ENCODE measurements at regions of chr14 and their contacts with region 1.

Region 1: DNA sequence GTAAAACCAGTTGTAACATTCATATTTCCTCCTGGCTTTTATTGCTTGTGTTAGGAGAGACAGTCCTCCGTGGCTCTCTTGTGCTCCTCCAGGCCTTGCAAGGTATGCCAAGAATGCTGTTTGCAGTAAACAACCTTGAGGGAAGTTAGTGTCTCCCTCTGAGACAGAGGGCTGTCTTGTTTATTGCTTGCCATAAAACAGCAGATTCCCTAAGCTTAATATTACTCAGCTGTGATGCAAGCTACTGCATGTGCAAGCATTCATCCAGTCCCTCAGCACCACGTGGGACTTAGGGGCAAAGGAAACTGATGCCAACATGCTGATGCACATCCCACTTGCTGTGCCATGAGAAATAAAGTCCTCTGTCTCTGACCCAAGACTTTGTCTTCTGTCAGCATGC is 6.6 kb downstream of the POMT2 start:
- DNase-seq: peak in 1 of 2 experiments; percentile 83
- H3K4me3 ChIP-seq: no peak overlapping the region
- H3K27ac ChIP-seq: no peak overlapping the region
- H3K4me1 ChIP-seq: peaks cover 1% of the 10 kb centered on the region; the same call in 1 of the 2 replicates
- H3K27me3 ChIP-seq: no peaks in the 10 kb centered on the region
- CTCF ChIP-seq: 0 out of 2 replicates have a peak, but pooled peaks have one; percentile 9

Region 2: DNA sequence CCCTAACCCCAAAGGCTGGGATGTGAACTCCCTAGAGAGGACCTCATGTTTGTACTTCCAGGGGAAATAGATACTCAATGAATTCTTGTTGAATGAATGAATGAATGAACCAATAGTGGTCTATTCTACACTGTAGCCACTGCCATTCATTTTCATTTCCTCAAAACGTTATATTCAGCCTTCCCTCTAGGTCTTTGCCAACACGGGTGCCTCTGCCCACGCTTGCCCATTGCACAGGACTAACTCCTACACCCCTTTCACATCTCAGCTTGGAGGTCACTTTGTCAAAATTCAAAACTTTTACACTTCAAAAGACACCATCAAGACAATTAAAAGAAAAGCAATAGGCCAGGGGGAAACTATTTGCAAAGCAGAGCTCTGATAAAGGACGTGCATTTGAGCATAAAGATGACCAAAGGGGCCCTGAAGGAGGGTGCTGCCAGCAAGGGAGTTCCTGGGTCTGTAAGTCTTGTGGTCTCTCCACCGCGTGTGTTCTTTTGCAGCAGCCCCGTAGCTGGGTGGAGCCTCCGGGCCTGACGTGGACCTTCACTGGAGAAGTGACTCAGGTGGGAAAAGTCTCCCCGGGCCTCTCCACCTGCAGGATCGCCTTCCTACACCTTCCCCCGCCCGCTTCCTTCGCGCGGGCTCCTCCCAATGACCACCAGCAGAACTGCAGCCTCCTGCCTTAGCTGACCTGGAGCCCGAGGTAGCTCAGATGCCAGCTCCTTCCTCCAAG is 100.9 kb before region 1 on chr14:
- CTCF ChIA-PET with region 1: interaction called, 10 read pairs
- POLR2A ChIA-PET with region 1: no interaction called
- intact Hi-C with region 1: no loop called
- DNase-seq: peak; percentile 55 to 82
- H3K4me3 ChIP-seq: no peak overlapping the region
- H3K27ac ChIP-seq: no peak overlapping the region
- H3K4me1 ChIP-seq: no peaks in the 10 kb centered on the region
- H3K27me3 ChIP-seq: peaks cover 71% of the 10 kb centered on the region
- CTCF ChIP-seq: peak; percentile 90

Region 3: DNA sequence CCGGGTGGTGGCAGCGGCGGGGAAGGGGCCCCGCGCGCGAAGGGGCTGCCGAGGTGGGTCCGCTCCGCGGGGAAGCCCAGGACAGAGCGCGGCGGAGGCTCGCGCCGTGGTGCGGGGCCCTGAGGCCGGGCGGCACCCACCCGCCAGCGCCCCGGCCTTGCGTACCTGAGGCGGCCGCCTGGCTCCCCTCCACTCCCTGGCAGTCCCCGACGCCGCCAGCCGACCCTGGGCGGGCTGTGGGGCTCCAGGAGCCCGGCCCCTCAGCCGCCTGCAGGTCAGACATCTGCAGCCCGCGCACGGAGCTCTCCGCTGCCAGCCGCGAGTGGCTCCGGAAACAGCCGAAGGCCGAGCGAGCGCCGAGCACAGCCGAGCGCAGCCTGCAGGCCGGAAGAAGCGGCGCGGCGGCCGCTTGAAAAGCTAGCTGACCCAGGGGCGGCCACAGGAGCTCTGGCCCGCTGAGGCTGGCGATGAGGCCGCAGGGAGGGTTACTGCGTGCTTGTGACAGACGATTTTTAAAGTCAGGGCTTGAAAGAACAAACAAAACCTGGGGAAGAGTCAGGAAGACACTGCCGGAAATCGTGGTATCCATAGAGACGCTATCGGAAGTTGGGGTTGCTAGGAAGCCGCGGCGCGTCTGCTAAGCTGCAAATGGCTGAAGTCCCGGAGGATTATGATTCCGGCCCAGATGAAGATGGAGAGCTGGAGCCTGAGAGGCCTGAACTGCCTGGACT is 62.9 kb after region 1 on chr14 and contains the starts of genes SAMD15 and TMED8:
- CTCF ChIA-PET with region 1: interaction called, 11 read pairs
- POLR2A ChIA-PET with region 1: no interaction called
- intact Hi-C with region 1: no loop called
- DNase-seq: peak; percentile 83 to 97
- H3K4me3 ChIP-seq: peak within 1 kb of the TSS; percentile 82
- H3K27ac ChIP-seq: peak within 1 kb of the TSS; percentile 40
- H3K4me1 ChIP-seq: peaks cover 19% of the 10 kb centered on the region
- H3K27me3 ChIP-seq: no peaks in the 10 kb centered on the region
- CTCF ChIP-seq: peak; percentile 46; the same call in 1 of the 2 replicates
- total RNA-seq, gene SAMD15: 4.8 and 7.8 TPM in 2 replicates
- total RNA-seq, gene TMED8: 32.1 and 42.6 TPM in 2 replicates

Region 4: GRCh38 chr14:77554207-77554606 is 240.2 kb after region 1 on chr14:
- CTCF ChIA-PET with region 1: interaction called, 6 read pairs
- POLR2A ChIA-PET with region 1: no interaction called
- intact Hi-C with region 1: loop called (anchors 5 kb)
- DNase-seq: no peak
- H3K4me3 ChIP-seq: no peak overlapping the region
- H3K27ac ChIP-seq: no peak overlapping the region
- H3K4me1 ChIP-seq: no peaks in the 10 kb centered on the region
- H3K27me3 ChIP-seq: no peaks in the 10 kb centered on the region
- CTCF ChIP-seq: no peak